Common myeloid progenitor, CD34-positive (primary cell): ENCODE measurements at regions of chr7 and their contacts with region 1.

Region 1: GRCh38 chr7:144796919-144797318 is 38.9 kb downstream of the TPK1 start:
- DNase-seq: no peak
- H3K4me3 ChIP-seq: no peak overlapping the region
- H3K27ac ChIP-seq: no peak overlapping the region
- H3K4me1 ChIP-seq: no peaks in the 10 kb centered on the region
- H3K27me3 ChIP-seq: no peaks in the 10 kb centered on the region

Region 2: GRCh38 chr7:144786522-144786921 is 10.4 kb before region 1 on chr7:
- CTCF ChIA-PET with region 1: interaction called, 11 read pairs
- POLR2A ChIA-PET with region 1: no interaction called
- DNase-seq: peak in 2 of 3 donors; percentile 9
- H3K4me3 ChIP-seq: no peak overlapping the region
- H3K27ac ChIP-seq: no peak overlapping the region
- H3K4me1 ChIP-seq: peaks cover 0 to 2% (median 0%) of the 10 kb centered on the region in 4 experiments
- H3K27me3 ChIP-seq: no peaks in the 10 kb centered on the region

Region 3: DNA sequence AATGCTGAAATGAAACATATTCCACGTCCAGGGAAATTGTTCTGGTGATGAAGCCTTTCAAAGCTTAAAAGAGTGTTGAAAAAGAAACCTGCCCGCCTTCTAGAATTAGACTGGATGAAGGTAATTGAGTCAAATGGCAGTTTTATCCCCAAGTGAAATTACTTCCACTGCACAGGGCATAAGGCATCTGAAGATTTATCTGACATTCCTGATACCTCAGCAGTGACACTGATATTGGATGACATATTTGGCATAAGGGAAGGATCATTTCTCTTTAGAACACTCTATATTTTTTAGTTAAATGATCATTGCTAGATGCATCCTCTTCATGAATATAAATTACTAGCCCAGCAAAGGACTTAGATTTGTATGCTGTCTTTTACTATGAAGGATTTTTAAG is 268.6 kb after region 1 on chr7:
- CTCF ChIA-PET with region 1: no interaction called
- POLR2A ChIA-PET with region 1: no interaction called
- DNase-seq: no peak
- H3K4me3 ChIP-seq: no peak overlapping the region
- H3K27ac ChIP-seq: no peak overlapping the region
- H3K4me1 ChIP-seq: no peaks in the 10 kb centered on the region
- H3K27me3 ChIP-seq: no peaks in the 10 kb centered on the region